B cell (primary cell): ENCODE measurements at regions of chr6 and their contacts with region 1.

Region 1: DNA sequence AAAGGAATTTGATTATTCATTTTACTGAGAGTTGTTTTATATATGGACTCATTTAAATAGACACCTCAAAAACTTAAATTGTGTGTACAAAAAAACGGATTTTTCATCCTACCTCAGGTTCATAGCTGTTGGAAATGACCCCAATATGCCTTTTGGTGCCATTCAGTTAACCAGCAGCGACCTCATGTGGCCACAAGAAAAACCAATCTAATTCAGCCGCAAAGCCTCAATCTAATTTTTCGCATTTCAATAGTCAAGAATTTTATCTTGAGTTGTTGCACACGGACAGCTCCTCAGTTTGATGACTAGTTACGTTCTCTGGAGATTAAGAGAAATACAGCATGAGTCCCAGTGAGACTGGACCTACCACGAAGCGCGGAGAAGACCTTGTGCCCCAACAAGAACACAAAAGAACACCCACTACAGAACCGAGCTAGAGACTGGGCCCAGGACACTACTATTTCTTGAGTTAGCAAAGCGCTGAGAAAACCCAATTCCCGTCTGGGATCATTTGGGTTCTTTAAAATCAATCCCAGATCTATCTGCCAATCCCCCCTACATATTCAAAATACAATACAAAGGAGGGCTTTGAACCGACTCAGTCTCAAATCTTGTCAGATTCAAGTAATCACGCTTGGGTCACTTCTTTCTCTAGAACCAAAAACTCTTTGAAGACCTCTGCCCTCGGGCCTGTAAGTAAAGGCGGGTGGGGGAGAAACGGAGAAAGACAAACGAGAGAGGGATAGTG is 1.1 kb downstream of the TCP11 start:
- DNase-seq: peak; percentile 76
- ATAC-seq: no peak
- H3K4me3 ChIP-seq: no peak overlapping the region
- H3K4me3 Mint-ChIP-seq: peak overlapping the region; percentile 42
- H3K27ac ChIP-seq: no peak overlapping the region
- H3K27ac Mint-ChIP-seq: no peak overlapping the region
- H3K4me1 ChIP-seq: peaks cover 9 to 18% of the 10 kb centered on the region in 2 donors
- H3K4me1 Mint-ChIP-seq: peaks cover 18% of the 10 kb centered on the region
- H3K27me3 ChIP-seq: peaks cover 0 to 17% (median 8%) of the 10 kb centered on the region in 4 experiments
- H3K27me3 Mint-ChIP-seq: peaks cover 18% of the 10 kb centered on the region
- CTCF ChIP-seq: peak; percentile 94

Region 2: GRCh38 chr6:34161857-34162515 is 978.1 kb before region 1 on chr6:
- CTCF ChIA-PET with region 1: interaction called, 5 read pairs
- POLR2A ChIA-PET with region 1: no interaction called
- intact Hi-C with region 1: loop called (anchors 5 kb)
- DNase-seq: no peak
- ATAC-seq: no peak
- H3K4me3 ChIP-seq: no peak overlapping the region
- H3K4me3 Mint-ChIP-seq: no peak overlapping the region
- H3K27ac ChIP-seq: no peak overlapping the region
- H3K27ac Mint-ChIP-seq: no peak overlapping the region
- H3K4me1 ChIP-seq: no peaks in the 10 kb centered on the region
- H3K4me1 Mint-ChIP-seq: no peaks in the 10 kb centered on the region
- H3K27me3 ChIP-seq: no peaks in the 10 kb centered on the region
- H3K27me3 Mint-ChIP-seq: peaks cover 15% of the 10 kb centered on the region
- CTCF ChIP-seq: no peak

Region 3: GRCh38 chr6:34459899-34460593 is 680.0 kb before region 1 on chr6:
- CTCF ChIA-PET with region 1: interaction called, 32 read pairs
- POLR2A ChIA-PET with region 1: no interaction called
- intact Hi-C with region 1: no loop called
- DNase-seq: peak; percentile 66
- ATAC-seq: peak; percentile 81
- H3K4me3 ChIP-seq: no peak overlapping the region
- H3K4me3 Mint-ChIP-seq: no peak overlapping the region
- H3K27ac ChIP-seq: no peak overlapping the region
- H3K27ac Mint-ChIP-seq: no peak overlapping the region
- H3K4me1 ChIP-seq: peaks cover under 1% of the 10 kb centered on the region in 2 donors
- H3K4me1 Mint-ChIP-seq: peaks cover 3% of the 10 kb centered on the region
- H3K27me3 ChIP-seq: peaks cover 0 to 16% (median 4%) of the 10 kb centered on the region in 4 experiments
- H3K27me3 Mint-ChIP-seq: peaks cover 11% of the 10 kb centered on the region
- CTCF ChIP-seq: peak; percentile 80

Region 4: GRCh38 chr6:34602318-34603111 is 537.6 kb before region 1 on chr6:
- CTCF ChIA-PET with region 1: no interaction called
- POLR2A ChIA-PET with region 1: no interaction called
- intact Hi-C with region 1: loop called (anchors 10 kb)
- DNase-seq: no peak
- ATAC-seq: no peak
- H3K4me3 ChIP-seq: no peak overlapping the region
- H3K4me3 Mint-ChIP-seq: no peak overlapping the region
- H3K27ac ChIP-seq: no peak overlapping the region
- H3K27ac Mint-ChIP-seq: no peak overlapping the region
- H3K4me1 ChIP-seq: peaks cover 4% of the 10 kb centered on the region in 2 donors
- H3K4me1 Mint-ChIP-seq: peaks cover 28% of the 10 kb centered on the region
- H3K27me3 ChIP-seq: no peaks in the 10 kb centered on the region
- H3K27me3 Mint-ChIP-seq: no peaks in the 10 kb centered on the region
- CTCF ChIP-seq: no peak

Region 5: DNA sequence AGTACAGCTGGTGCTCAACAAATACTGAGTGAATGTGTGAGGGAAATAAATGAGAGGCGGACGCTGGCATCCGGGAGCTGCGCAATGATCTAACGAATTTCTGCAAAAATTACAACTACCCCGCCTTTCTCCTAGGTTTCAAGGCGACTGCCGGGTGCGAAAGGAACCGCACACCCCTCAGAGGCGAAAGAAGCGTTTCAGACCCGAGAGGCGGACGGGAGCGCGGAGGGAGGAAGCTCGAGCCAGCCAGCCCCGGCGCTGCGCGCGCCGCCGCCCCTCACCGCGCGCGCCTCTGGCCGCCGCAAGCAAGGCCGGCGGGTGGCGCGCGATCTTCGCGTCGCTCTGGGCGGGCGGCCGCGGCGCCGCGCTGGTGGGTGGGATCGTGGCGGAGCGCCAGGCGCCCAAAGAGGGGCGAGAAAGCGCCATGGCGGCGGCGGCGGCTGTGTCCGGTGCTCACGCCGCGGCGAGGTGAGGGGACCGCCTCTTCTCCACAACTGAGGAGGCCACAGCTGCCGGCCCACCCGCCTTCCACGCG is 348.3 kb before region 1 on chr6 and contains the start of gene BLTP3A:
- CTCF ChIA-PET with region 1: interaction called, 12 read pairs
- POLR2A ChIA-PET with region 1: no interaction called
- intact Hi-C with region 1: no loop called
- DNase-seq: peak; percentile 90
- ATAC-seq: peak; percentile 93
- H3K4me3 ChIP-seq: peak within 1 kb of the TSS; percentile 81 to 93 (median 90)
- H3K4me3 Mint-ChIP-seq: peak within 1 kb of the TSS; percentile 94
- H3K27ac ChIP-seq: peak within 1 kb of the TSS; percentile 71 to 83
- H3K27ac Mint-ChIP-seq: peak within 1 kb of the TSS; percentile 94
- H3K4me1 ChIP-seq: peaks cover 17 to 19% of the 10 kb centered on the region in 2 donors
- H3K4me1 Mint-ChIP-seq: peaks cover 22% of the 10 kb centered on the region
- H3K27me3 ChIP-seq: no peaks in the 10 kb centered on the region
- H3K27me3 Mint-ChIP-seq: no peaks in the 10 kb centered on the region
- CTCF ChIP-seq: no peak
- total RNA-seq, gene BLTP3A: 11.3 and 13.2 TPM in 2 replicates

Region 6: GRCh38 chr6:34986845-34987246 is 153.2 kb before region 1 on chr6:
- CTCF ChIA-PET with region 1: interaction called, 21 read pairs
- POLR2A ChIA-PET with region 1: no interaction called
- intact Hi-C with region 1: no loop called
- DNase-seq: peak; percentile 64
- ATAC-seq: no peak
- H3K4me3 ChIP-seq: no peak overlapping the region
- H3K4me3 Mint-ChIP-seq: no peak overlapping the region
- H3K27ac ChIP-seq: no peak overlapping the region
- H3K27ac Mint-ChIP-seq: no peak overlapping the region
- H3K4me1 ChIP-seq: no peaks in the 10 kb centered on the region
- H3K4me1 Mint-ChIP-seq: no peaks in the 10 kb centered on the region
- H3K27me3 ChIP-seq: no peaks in the 10 kb centered on the region
- H3K27me3 Mint-ChIP-seq: no peaks in the 10 kb centered on the region
- CTCF ChIP-seq: peak; percentile 83